ENCODE measurements at regions of chr7 and their contacts with region 1.

Region 1: GRCh38 chr7:44921607-44922359 is 36.5 kb upstream of the PURB start:
- DNase-seq: peak; percentile 98
- H3K4me3 Mint-ChIP-seq: no peak overlapping the region
- H3K27ac Mint-ChIP-seq: no peak overlapping the region
- H3K4me1 Mint-ChIP-seq: no peaks in the 10 kb centered on the region
- H3K27me3 Mint-ChIP-seq: peaks cover 29% of the 10 kb centered on the region
- CTCF ChIP-seq: peak; percentile 96

Region 2: DNA sequence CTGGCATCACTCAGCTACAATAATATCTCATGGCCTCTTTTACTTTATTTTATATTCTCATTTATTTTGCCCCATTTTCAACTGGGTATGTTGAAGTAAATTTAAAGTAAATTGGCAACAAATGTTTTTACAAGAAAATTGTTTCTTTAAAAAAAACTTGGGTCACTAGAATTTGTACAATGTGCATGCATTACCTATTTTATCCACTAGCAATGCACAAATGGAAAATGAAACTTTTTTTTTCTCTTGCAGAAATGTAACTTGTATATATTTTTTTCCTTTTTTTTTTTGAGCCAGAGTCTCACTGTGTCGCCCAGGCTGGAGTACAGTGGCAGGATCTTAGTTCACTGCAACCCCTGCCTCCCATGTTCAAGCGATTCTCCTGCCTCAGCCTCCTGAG is 63.6 kb before region 1 on chr7:
- CTCF ChIA-PET with region 1: interaction called, 5 read pairs
- intact Hi-C with region 1: loop called (anchors 1 kb)
- DNase-seq: no peak
- H3K4me3 Mint-ChIP-seq: no peak overlapping the region
- H3K27ac Mint-ChIP-seq: no peak overlapping the region
- H3K4me1 Mint-ChIP-seq: peaks cover 20% of the 10 kb centered on the region
- H3K27me3 Mint-ChIP-seq: no peaks in the 10 kb centered on the region
- CTCF ChIP-seq: peak; percentile 29

Region 3: GRCh38 chr7:44905002-44905635 is 16.7 kb before region 1 on chr7:
- CTCF ChIA-PET with region 1: no interaction called
- intact Hi-C with region 1: no loop called
- DNase-seq: no peak
- H3K4me3 Mint-ChIP-seq: no peak overlapping the region
- H3K27ac Mint-ChIP-seq: no peak overlapping the region
- H3K4me1 Mint-ChIP-seq: no peaks in the 10 kb centered on the region
- H3K27me3 Mint-ChIP-seq: peaks cover 19% of the 10 kb centered on the region
- CTCF ChIP-seq: no peak

Region 4: GRCh38 chr7:44986218-44987053 is 64.7 kb after region 1 on chr7:
- CTCF ChIA-PET with region 1: no interaction called
- intact Hi-C with region 1: no loop called
- DNase-seq: peak; percentile 98
- H3K4me3 Mint-ChIP-seq: peak overlapping the region; percentile 86
- H3K27ac Mint-ChIP-seq: peak overlapping the region; percentile 98
- H3K4me1 Mint-ChIP-seq: peaks cover 66% of the 10 kb centered on the region
- H3K27me3 Mint-ChIP-seq: no peaks in the 10 kb centered on the region
- CTCF ChIP-seq: no peak

Measured in Calu3 (cell line).